ENCODE measurements at regions of chr5 and their contacts with region 1.

Region 1: GRCh38 chr5:89388872-89389271 is 505.9 kb upstream of the MEF2C start:
- DNase-seq: no peak
- ATAC-seq: no peak
- H3K4me3 Mint-ChIP-seq: no peak overlapping the region
- H3K27ac Mint-ChIP-seq: no peak overlapping the region
- H3K4me1 Mint-ChIP-seq: peaks cover 22% of the 10 kb centered on the region
- H3K27me3 Mint-ChIP-seq: no peaks in the 10 kb centered on the region
- CTCF ChIP-seq: no peak

Region 2: GRCh38 chr5:89372176-89372575 is 16.7 kb before region 1 on chr5:
- CTCF ChIA-PET with region 1: no interaction called
- POLR2A ChIA-PET with region 1: no interaction called
- intact Hi-C with region 1: loop called (anchors 2 kb)
- DNase-seq: no peak
- ATAC-seq: no peak
- H3K4me3 Mint-ChIP-seq: no peak overlapping the region
- H3K27ac Mint-ChIP-seq: no peak overlapping the region
- H3K4me1 Mint-ChIP-seq: peaks cover 21% of the 10 kb centered on the region
- H3K27me3 Mint-ChIP-seq: no peaks in the 10 kb centered on the region
- CTCF ChIP-seq: no peak

Region 3: DNA sequence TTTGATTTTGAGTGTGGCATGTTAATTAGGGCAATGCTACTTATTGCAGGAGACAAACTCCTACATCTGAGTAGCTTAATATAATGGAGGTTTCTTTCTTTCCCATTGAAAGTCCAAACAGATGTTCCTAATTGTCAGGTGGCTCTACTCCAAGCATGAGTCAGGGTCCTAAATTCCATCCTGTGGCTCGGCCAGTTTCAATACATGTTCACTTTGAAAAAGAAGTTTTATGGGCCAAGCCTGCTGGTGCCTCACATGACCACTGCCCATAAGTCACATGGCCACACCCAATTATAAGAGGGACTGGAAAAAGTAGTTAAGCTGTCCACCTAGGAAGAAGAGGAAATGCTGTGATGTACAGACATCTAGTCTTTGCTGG is 1823.8 kb after region 1 on chr5:
- CTCF ChIA-PET with region 1: no interaction called
- POLR2A ChIA-PET with region 1: no interaction called
- intact Hi-C with region 1: no loop called
- DNase-seq: no peak
- ATAC-seq: no peak
- H3K4me3 Mint-ChIP-seq: no peak overlapping the region
- H3K27ac Mint-ChIP-seq: no peak overlapping the region
- H3K4me1 Mint-ChIP-seq: no peaks in the 10 kb centered on the region
- H3K27me3 Mint-ChIP-seq: peaks cover 7% of the 10 kb centered on the region
- CTCF ChIP-seq: no peak

Measured in activated B cell treated with CpG ODN at 0.5 μM for 24 hours (primary cell).